ENCODE measurements at regions of chr1 and their contacts with region 1.

Region 1: GRCh38 chr1:193348091-193348768 is 161.8 kb upstream of the B3GALT2 start:
- DNase-seq: no peak
- ATAC-seq: no peak
- H3K4me3 ChIP-seq: no peak overlapping the region
- H3K4me3 Mint-ChIP-seq: no peak overlapping the region
- H3K27ac ChIP-seq: no peak overlapping the region
- H3K27ac Mint-ChIP-seq: no peak overlapping the region
- H3K4me1 ChIP-seq: no peaks in the 10 kb centered on the region
- H3K4me1 Mint-ChIP-seq: no peaks in the 10 kb centered on the region
- H3K27me3 ChIP-seq: no peaks in the 10 kb centered on the region
- H3K27me3 Mint-ChIP-seq: no peaks in the 10 kb centered on the region
- CTCF ChIP-seq: no peak

Region 2: DNA sequence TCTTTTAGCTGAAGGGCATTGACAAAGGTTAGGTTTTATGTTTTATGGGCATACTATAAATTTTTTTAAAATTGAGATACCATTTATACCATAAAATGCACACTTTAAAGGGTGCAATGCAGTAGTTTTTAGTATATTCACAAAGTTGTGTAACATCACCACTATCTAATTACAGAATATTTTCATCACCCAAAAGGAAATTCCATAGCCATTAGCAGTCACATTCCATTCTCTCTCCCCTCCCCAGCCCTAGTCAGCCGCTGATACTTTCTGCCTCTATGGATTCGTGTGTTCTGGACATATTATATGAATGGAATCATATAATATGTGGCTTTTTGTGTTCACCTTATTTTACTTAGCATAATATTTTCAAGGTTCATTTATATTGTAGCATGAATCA is 26.0 kb before region 1 on chr1:
- CTCF ChIA-PET with region 1: no interaction called
- POLR2A ChIA-PET with region 1: no interaction called
- intact Hi-C with region 1: loop called in 1 of 2 experiments (anchors 1 kb)
- DNase-seq: no peak
- ATAC-seq: no peak
- H3K4me3 ChIP-seq: no peak overlapping the region
- H3K4me3 Mint-ChIP-seq: no peak overlapping the region
- H3K27ac ChIP-seq: no peak overlapping the region
- H3K27ac Mint-ChIP-seq: no peak overlapping the region
- H3K4me1 ChIP-seq: no peaks in the 10 kb centered on the region
- H3K4me1 Mint-ChIP-seq: no peaks in the 10 kb centered on the region
- H3K27me3 ChIP-seq: no peaks in the 10 kb centered on the region
- H3K27me3 Mint-ChIP-seq: no peaks in the 10 kb centered on the region
- CTCF ChIP-seq: no peak

Region 3: DNA sequence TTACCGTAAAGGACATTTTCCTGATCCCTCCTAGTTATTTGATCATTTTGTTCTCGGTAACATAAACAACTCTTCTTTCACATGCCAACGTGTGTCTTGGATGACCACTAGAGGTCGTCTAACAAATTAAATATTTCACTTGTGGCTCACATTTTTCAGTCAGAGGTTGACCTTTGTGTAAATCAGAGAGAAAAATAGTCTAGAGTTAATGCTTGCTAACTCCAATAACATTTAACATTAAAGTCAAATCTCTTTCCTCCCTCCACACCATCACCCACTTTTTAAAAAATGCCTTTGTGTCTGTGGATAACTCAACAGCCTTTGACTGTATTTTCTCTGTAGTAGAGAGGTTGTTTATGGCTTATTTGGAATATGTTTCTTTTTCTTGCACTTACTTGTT is 58.7 kb after region 1 on chr1:
- CTCF ChIA-PET with region 1: no interaction called
- POLR2A ChIA-PET with region 1: no interaction called
- intact Hi-C with region 1: no loop called
- DNase-seq: peak in 3 of 9 experiments; percentile 8 to 69 (median 57)
- ATAC-seq: peak; percentile 59
- H3K4me3 ChIP-seq: no peak overlapping the region
- H3K4me3 Mint-ChIP-seq: no peak overlapping the region
- H3K27ac ChIP-seq: no peak overlapping the region
- H3K27ac Mint-ChIP-seq: no peak overlapping the region
- H3K4me1 ChIP-seq: peaks cover 10% of the 10 kb centered on the region
- H3K4me1 Mint-ChIP-seq: peaks cover 16% of the 10 kb centered on the region
- H3K27me3 ChIP-seq: no peaks in the 10 kb centered on the region
- H3K27me3 Mint-ChIP-seq: no peaks in the 10 kb centered on the region
- CTCF ChIP-seq: peak; percentile 86